Endothelial cell of umbilical vein (primary cell): ENCODE measurements at regions of chr20 and their contacts with region 1.

Region 1: DNA sequence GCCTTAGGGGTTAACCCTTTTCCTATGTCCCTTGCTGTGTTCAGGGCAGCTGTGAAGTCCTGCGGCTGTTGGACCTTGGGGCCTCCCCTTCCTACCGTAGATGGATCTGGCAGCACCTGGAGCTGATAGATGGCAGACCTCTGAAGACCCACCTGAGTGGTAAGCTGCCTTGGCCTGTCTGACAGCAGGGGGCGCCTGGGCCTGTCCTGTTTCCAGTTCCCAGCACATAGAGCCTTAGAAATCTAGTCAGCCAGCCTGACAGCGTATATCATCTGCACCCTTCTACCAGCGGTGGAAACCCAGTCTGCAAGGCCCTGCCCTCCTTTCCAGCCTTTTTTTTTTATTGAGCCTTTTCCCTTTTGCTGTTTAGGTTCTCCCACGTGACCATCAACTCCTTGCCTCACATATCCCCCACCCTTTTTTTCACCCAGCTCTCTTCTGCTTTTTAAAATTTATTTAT is 26.6 kb downstream of the CNBD2 start:
- DNase-seq: peak; percentile 85
- H3K4me3 ChIP-seq: no peak overlapping the region
- H3K27ac ChIP-seq: no peak overlapping the region
- H3K4me1 ChIP-seq: no peaks in the 10 kb centered on the region
- H3K27me3 ChIP-seq: peaks cover 0 to under 1% of the 10 kb centered on the region in 2 experiments
- CTCF ChIP-seq: peak; percentile 89 to 93
- POLR2A ChIP-seq: no peak

Region 2: DNA sequence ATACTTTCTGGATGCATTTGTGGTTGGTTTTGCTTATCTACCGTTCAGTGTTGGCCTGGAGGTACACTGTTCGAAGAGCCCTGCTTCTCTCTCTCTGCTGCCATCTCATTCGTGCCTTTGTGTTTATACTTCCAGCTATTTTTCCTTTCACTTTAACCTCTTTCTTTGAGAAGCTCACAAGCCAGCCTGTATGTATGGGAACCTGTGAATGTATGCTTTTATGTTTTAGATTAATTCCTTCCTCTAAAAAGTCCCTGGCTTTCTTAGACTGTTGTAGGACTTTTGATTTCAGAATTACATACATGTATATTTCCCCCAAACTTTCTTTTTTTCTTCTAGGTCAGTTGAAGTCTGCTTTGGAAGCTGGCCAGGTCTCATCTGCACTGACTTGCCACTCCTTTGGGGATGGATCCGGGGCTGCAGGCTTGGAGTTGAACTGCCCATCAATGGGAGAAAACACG is 123.7 kb before region 1 on chr20:
- CTCF ChIA-PET with region 1: no interaction called
- POLR2A ChIA-PET with region 1: no interaction called
- dilution Hi-C with region 1: no loop called
- intact Hi-C with region 1: no loop called
- DNase-seq: peak; percentile 79
- H3K4me3 ChIP-seq: peak overlapping the region in 1 of 3 experiments; percentile 42
- H3K27ac ChIP-seq: peak overlapping the region; percentile 62
- H3K4me1 ChIP-seq: peaks cover 25% of the 10 kb centered on the region
- H3K27me3 ChIP-seq: no peaks in the 10 kb centered on the region
- CTCF ChIP-seq: no peak
- POLR2A ChIP-seq: no peak

Region 3: GRCh38 chr20:35954200-35954906 is 40.7 kb before region 1 on chr20 and contains the start of gene SCAND1:
- CTCF ChIA-PET with region 1: interaction called, 19 read pairs
- POLR2A ChIA-PET with region 1: no interaction called
- dilution Hi-C with region 1: no loop called
- intact Hi-C with region 1: no loop called
- DNase-seq: peak; percentile 98
- H3K4me3 ChIP-seq: peak within 1 kb of the TSS; percentile 39 to 93 (median 82)
- H3K27ac ChIP-seq: peak within 1 kb of the TSS; percentile 94
- H3K4me1 ChIP-seq: peaks cover 17% of the 10 kb centered on the region
- H3K27me3 ChIP-seq: no peaks in the 10 kb centered on the region
- CTCF ChIP-seq: peak; percentile 99
- POLR2A ChIP-seq: peak; percentile 79
- total RNA-seq, gene SCAND1: 83.1 and 83.5 TPM in 2 replicates

Region 4: GRCh38 chr20:36050436-36051317 is 55.7 kb after region 1 on chr20:
- CTCF ChIA-PET with region 1: interaction called, 6 read pairs
- POLR2A ChIA-PET with region 1: no interaction called
- dilution Hi-C with region 1: no loop called
- intact Hi-C with region 1: loop called (anchors 2 kb)
- DNase-seq: peak; percentile 74
- H3K4me3 ChIP-seq: peak overlapping the region; percentile 63 to 85 (median 66)
- H3K27ac ChIP-seq: peak overlapping the region; percentile 87
- H3K4me1 ChIP-seq: peaks cover 8% of the 10 kb centered on the region
- H3K27me3 ChIP-seq: no peaks in the 10 kb centered on the region
- CTCF ChIP-seq: no peak
- POLR2A ChIP-seq: peak; percentile 98

Region 5: DNA sequence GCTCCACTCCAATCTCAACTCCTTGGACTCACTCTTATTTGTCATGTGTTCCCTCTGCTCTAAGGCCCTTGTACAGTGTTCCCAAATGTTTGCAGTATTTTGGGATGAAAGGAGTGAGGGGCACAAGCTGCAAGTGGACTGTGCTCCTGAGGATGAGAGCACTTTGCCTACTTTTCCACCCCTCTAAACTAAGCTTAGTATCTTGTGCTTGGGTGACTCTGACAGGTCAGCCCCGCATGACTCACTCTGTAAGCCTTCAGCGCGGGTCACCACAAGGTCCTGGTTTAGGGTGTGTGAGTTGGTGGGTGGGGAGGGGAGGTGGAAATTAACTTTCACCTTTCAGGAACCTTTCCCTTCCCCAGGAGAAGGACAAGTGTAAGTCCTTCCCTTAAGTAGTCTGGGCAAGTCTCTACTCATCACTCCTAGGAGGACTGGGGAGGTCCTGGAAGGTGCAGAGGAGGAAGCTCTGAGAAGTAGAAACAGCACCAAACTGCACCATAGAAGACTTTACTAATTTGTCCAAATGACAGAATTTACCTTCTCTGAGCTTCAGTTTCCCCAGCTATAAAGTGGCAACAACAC is 90.8 kb after region 1 on chr20:
- CTCF ChIA-PET with region 1: interaction called, 22 read pairs
- POLR2A ChIA-PET with region 1: no interaction called
- dilution Hi-C with region 1: no loop called
- intact Hi-C with region 1: loop called (anchors 5 kb)
- DNase-seq: no peak
- H3K4me3 ChIP-seq: no peak overlapping the region
- H3K27ac ChIP-seq: no peak overlapping the region
- H3K4me1 ChIP-seq: peaks cover 10% of the 10 kb centered on the region
- H3K27me3 ChIP-seq: peaks cover 0 to 4% of the 10 kb centered on the region in 2 experiments
- CTCF ChIP-seq: no peak
- POLR2A ChIP-seq: no peak

Region 6: DNA sequence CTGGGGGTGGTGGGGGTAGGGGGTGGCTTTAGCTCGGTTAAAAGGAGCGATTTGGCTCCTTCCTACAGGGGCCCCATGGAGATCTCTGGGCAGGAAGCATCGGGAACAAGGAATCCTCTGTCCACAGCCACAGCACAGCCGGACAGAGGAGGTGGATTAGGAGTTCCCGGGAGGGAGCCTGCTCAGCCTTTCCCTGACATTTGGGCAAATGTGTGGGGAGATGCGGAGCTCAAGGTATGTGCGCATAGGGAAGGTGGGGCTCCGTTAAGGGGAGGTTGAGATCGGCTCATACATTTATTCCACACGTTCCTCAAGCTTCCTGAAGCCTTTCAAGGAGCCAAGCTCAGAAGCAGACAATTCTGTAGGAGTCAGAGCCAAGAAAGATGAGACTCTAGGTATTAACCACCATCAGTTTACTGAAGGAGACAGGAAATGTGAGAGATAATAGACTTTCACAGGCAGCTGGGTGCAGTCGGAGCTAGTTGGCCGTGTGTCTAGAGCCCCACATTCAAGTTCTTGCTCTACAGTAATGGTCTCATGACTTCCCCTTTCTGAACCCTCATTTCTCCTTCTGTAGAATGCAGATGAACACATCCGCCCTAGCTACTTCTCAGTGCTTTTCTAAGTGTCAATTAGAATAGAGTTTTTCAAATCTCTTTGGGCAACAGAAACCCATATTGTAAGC is 118.7 kb after region 1 on chr20:
- CTCF ChIA-PET with region 1: interaction called, 43 read pairs
- POLR2A ChIA-PET with region 1: no interaction called
- dilution Hi-C with region 1: no loop called
- intact Hi-C with region 1: no loop called
- DNase-seq: no peak
- H3K4me3 ChIP-seq: no peak overlapping the region
- H3K27ac ChIP-seq: no peak overlapping the region
- H3K4me1 ChIP-seq: no peaks in the 10 kb centered on the region
- H3K27me3 ChIP-seq: peaks cover 3 to 13% of the 10 kb centered on the region in 2 experiments
- CTCF ChIP-seq: no peak
- POLR2A ChIP-seq: no peak

Region 7: GRCh38 chr20:36154700-36155628 is 159.9 kb after region 1 on chr20 and contains the start of gene EPB41L1:
- CTCF ChIA-PET with region 1: interaction called, 10 read pairs
- POLR2A ChIA-PET with region 1: no interaction called
- dilution Hi-C with region 1: no loop called
- intact Hi-C with region 1: no loop called
- DNase-seq: no peak
- H3K4me3 ChIP-seq: peak within 1 kb of the TSS; percentile 30 to 44 (median 35)
- H3K27ac ChIP-seq: no peak within 1 kb of the TSS
- H3K4me1 ChIP-seq: peaks cover 12% of the 10 kb centered on the region
- H3K27me3 ChIP-seq: no peaks in the 10 kb centered on the region
- CTCF ChIP-seq: no peak
- POLR2A ChIP-seq: no peak
- total RNA-seq, gene EPB41L1: 11.1 and 12.2 TPM in 2 replicates